ENCODE measurements at regions of chr4 and their contacts with region 1.

Region 1: DNA sequence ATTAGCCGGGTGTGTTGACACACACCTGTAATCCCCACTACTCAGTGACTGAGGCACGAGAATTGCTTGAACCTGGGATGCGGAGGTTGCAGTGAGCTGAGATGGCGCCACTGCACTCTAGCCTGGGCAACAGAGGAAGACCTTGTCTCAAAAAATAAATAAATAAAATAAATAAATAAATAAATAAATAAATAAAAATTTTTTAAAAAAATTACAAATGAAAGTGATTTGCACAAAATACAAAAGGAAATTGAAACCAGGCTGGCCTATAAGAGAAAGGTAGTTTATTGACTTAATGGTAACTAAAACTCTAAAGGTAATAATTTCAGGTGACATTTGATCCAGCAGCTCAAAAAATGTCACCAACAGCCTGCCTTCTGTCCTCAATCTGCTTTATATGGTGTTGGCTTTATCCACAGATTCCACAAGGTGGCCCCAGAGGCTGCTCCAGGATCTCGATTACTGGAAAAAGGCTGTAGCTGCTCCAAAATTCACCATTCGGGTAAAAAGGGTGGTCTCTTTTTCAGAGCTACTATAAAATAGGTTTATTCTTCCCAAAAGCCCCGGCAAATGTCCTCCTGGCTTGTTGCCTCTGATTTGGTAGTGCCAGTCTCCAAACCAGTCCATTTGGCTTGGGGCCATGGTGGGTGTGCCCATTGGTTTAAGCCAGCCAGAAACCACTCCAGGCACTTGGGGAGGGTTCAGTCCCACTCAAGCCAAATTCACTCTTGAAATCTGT is 61.4 kb upstream of the TRIM2 start:
- DNase-seq: peak; percentile 82 to 95 (median 89)
- H3K4me3 ChIP-seq: peak overlapping the region in 2 of 3 donors; percentile 21 to 37
- H3K27ac ChIP-seq: peak overlapping the region in 1 of 2 donors; percentile 45
- H3K4me1 ChIP-seq: peaks cover 0 to 5% (median 2%) of the 10 kb centered on the region in 3 donors
- H3K27me3 ChIP-seq: no peaks in the 10 kb centered on the region
- CTCF ChIP-seq: peak; percentile 84

Region 2: GRCh38 chr4:153257151-153257620 is 114.3 kb after region 1 on chr4:
- intact Hi-C with region 1: no loop called
- DNase-seq: peak; percentile 68 to 84 (median 78)
- H3K4me3 ChIP-seq: peak overlapping the region in 1 of 3 donors; percentile 36
- H3K27ac ChIP-seq: no peak overlapping the region
- H3K4me1 ChIP-seq: no peaks in the 10 kb centered on the region
- H3K27me3 ChIP-seq: no peaks in the 10 kb centered on the region
- CTCF ChIP-seq: no peak

Region 3: GRCh38 chr4:153326513-153326912 is 183.6 kb after region 1 on chr4:
- intact Hi-C with region 1: loop called (anchors 10 kb)
- DNase-seq: no peak
- H3K4me3 ChIP-seq: no peak overlapping the region
- H3K27ac ChIP-seq: no peak overlapping the region
- H3K4me1 ChIP-seq: no peaks in the 10 kb centered on the region
- H3K27me3 ChIP-seq: no peaks in the 10 kb centered on the region
- CTCF ChIP-seq: no peak